Dorsolateral prefrontal cortex (tissue), 120 donors: ENCODE measurements at regions of chr15 and their contacts with region 1.

Region 1: GRCh38 chr15:72599855-72600464 is 54.5 kb upstream of the GOLGA6B start:
- DNase-seq: peak in 2 of 10 donors; percentile 13 to 27
- H3K4me3 ChIP-seq: no peak overlapping the region
- H3K27ac ChIP-seq: no peak overlapping the region
- H3K27me3 ChIP-seq: no peaks in the 10 kb centered on the region
- CTCF ChIP-seq: peak; percentile 33 to 79 (median 66)

Region 2: GRCh38 chr15:72671535-72671934 is 71.6 kb after region 1 on chr15:
- intact Hi-C with region 1: loop called (anchors 10 kb)
- DNase-seq: no peak
- H3K4me3 ChIP-seq: no peak overlapping the region
- H3K27ac ChIP-seq: no peak overlapping the region
- H3K27me3 ChIP-seq: peaks cover 0 to 25% (median 6%) of the 10 kb centered on the region in 45 donors
- CTCF ChIP-seq: no peak

Region 3: DNA sequence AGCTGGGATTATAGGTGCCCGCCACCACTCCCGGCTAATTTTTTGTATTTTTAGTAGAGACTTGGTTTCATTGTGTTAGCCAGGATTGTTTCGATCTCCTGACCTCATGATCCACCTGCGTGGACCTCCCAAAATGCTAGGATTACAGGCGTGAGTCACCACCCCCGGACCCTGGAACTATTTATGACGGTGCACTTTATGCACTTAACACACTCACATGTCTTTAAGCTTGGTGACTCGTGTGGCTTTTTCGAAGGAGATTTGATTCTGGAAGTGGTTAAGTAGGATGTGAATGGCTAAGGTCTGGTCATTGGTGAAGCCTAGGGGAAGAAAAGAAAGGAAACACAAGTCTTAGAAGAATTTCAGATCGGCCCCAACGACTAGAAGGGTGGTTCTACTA is 106.3 kb after region 1 on chr15:
- intact Hi-C with region 1: no loop called
- DNase-seq: no peak
- H3K4me3 ChIP-seq: no peak overlapping the region
- H3K27ac ChIP-seq: no peak overlapping the region
- H3K27me3 ChIP-seq: no peaks in the 10 kb centered on the region
- CTCF ChIP-seq: no peak

Region 4: GRCh38 chr15:72732516-72732915 is 132.6 kb after region 1 on chr15:
- intact Hi-C with region 1: no loop called
- DNase-seq: no peak
- H3K4me3 ChIP-seq: no peak overlapping the region
- H3K27ac ChIP-seq: no peak overlapping the region
- H3K27me3 ChIP-seq: no peaks in the 10 kb centered on the region
- CTCF ChIP-seq: no peak